ENCODE measurements at regions of chr6 and their contacts with region 1.

Region 1: DNA sequence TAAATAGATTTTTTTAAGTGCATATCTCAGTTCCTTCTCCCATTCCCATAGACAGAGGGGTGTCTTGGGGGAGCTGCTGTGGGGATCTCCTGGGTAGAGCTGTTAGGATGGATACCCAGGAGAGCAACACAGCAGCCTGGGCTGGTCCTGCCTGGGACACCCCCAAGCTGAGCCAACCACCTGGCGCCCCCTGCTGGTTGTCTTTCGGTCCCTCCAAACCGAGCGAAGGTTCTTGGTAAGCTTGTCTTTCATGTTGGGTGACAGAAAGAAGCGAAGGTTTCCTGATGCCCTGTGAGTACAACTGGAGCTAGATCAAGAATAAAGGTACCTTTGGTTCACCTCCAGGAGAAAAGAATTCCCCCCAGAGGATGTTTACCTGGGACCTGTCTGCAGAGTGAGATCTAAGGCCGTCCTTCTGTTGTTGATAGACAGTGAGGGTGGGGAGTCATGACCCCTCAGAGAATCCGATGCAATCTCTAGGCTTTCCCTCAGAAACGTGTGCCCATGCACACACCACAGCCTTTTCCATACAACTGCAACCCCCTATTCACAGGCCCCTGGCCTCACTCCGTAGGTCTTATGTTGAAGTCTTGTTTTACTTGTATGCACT is 50.8 kb downstream of the SNX9 start:
- DNase-seq: peak; percentile 73
- ATAC-seq: peak; percentile 87
- H3K4me3 Mint-ChIP-seq: no peak overlapping the region
- H3K27ac Mint-ChIP-seq: no peak overlapping the region
- H3K4me1 Mint-ChIP-seq: peaks cover 26% of the 10 kb centered on the region
- H3K27me3 Mint-ChIP-seq: no peaks in the 10 kb centered on the region
- CTCF ChIP-seq: peak; percentile 63

Region 2: DNA sequence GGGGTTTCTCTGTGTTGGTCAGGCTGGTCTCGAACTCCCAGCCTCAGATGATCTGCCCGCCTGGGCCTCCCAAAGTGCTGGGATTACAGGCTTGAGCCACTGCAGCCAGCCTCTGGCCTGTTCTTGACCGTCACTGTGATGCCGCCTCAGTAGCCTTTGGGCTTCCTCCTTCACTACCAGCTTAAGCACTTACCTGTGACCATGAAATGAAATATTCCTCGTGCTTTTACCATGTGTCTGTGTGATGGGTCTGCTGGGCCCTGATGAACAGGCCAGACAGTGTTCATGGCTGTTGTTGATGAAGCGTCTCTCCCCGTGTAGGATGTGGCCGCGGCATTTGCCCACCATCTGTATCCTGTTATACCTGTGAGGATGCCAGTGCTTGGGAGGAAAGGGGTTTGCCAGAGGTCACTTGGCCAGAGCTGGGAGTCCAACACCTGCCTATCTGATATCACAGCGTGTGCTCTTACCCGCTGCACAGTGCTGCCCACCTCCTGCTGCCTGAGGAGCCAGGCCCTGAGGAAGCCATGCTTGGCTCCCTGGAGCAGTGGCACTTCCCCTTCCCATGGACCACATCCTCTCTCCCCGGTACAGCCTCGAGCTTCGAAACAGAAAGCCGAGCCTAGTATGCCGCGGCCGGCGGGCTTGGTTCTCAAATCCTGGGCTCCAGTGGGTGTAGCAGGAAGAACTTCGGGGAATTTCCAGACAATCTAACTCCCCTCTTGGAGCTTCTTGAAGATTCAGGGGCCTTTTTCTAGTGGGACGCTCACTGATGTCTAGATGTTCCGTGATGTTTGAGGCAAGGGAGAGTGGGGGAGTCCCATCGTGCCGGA is 325.0 kb before region 1 on chr6:
- CTCF ChIA-PET with region 1: no interaction called
- POLR2A ChIA-PET with region 1: no interaction called
- intact Hi-C with region 1: no loop called
- DNase-seq: no peak
- ATAC-seq: peak; percentile 70
- H3K4me3 Mint-ChIP-seq: peak overlapping the region; percentile 64
- H3K27ac Mint-ChIP-seq: peak overlapping the region; percentile 43
- H3K4me1 Mint-ChIP-seq: peaks cover 47% of the 10 kb centered on the region
- H3K27me3 Mint-ChIP-seq: no peaks in the 10 kb centered on the region
- CTCF ChIP-seq: no peak

Region 3: GRCh38 chr6:157756708-157757429 is 117.0 kb before region 1 on chr6:
- CTCF ChIA-PET with region 1: interaction called, 250 read pairs
- POLR2A ChIA-PET with region 1: interaction called, 14 read pairs
- intact Hi-C with region 1: loop called (anchors 1 kb)
- DNase-seq: peak; percentile 72
- ATAC-seq: peak; percentile 54
- H3K4me3 Mint-ChIP-seq: peak overlapping the region; percentile 38
- H3K27ac Mint-ChIP-seq: no peak overlapping the region
- H3K4me1 Mint-ChIP-seq: peaks cover 69% of the 10 kb centered on the region
- H3K27me3 Mint-ChIP-seq: peaks cover 6% of the 10 kb centered on the region
- CTCF ChIP-seq: peak; percentile 60

Region 4: GRCh38 chr6:157823001-157823527 is 50.8 kb before region 1 on chr6 and contains the start of gene SNX9:
- CTCF ChIA-PET with region 1: interaction called, 4 read pairs
- POLR2A ChIA-PET with region 1: interaction called, 3 read pairs
- intact Hi-C with region 1: loop called (anchors 1 kb)
- DNase-seq: peak; percentile 70
- ATAC-seq: peak; percentile 65
- H3K4me3 Mint-ChIP-seq: peak within 1 kb of the TSS; percentile 95
- H3K27ac Mint-ChIP-seq: peak within 1 kb of the TSS; percentile 98
- H3K4me1 Mint-ChIP-seq: peaks cover 47% of the 10 kb centered on the region
- H3K27me3 Mint-ChIP-seq: no peaks in the 10 kb centered on the region
- CTCF ChIP-seq: no peak
- total RNA-seq, gene SNX9: 38.8 and 40.0 TPM in 2 replicates

Region 5: DNA sequence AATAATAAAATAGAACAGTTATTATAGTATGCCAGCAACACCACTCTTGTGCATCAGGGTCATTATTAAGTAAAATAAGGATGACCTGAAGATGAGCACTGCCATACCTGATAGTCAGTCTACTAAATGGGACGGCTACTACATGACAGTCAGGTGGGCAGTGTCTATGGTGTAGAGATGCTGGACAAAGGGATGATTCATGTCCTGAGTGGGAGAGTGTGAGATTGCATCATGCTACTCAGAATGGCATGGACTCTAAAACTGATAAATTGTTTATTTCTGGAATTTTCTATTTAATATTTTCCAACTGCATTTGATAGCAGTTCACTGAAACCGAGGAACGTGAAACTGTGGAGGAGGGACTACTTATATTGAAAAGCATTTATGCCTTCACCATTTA is 12.0 kb before region 1 on chr6:
- CTCF ChIA-PET with region 1: interaction called, 11 read pairs
- POLR2A ChIA-PET with region 1: interaction called, 3 read pairs
- intact Hi-C with region 1: no loop called
- DNase-seq: no peak
- ATAC-seq: no peak
- H3K4me3 Mint-ChIP-seq: no peak overlapping the region
- H3K27ac Mint-ChIP-seq: no peak overlapping the region
- H3K4me1 Mint-ChIP-seq: peaks cover 61% of the 10 kb centered on the region
- H3K27me3 Mint-ChIP-seq: no peaks in the 10 kb centered on the region
- CTCF ChIP-seq: no peak

Region 6: DNA sequence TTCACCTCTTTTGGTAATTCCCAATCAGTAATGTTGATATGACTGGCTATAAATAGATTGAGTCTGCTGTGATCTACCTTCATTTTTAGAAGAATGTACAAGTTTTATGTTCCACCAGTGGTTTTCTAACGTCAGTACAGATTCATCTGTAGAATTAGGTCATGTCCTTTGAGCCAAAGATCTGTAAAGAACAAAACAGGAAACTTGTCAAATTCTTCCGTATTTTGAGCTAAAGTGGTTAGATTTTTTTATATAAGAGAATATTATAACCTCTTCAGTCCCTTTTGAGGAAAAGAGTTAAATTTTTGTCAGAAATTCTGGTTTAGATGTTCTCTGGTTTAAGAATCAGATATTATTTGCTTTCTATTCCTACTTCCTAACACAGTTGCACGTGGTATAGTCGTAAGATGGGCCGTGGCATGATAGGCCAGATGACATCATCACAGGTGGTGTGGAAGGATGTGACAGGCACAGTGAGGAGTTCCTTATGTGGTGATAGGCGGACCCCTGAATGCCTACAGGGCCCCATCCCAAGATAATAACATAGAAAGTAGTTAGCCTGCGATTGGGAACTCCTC is 11.5 kb after region 1 on chr6:
- CTCF ChIA-PET with region 1: interaction called, 10 read pairs
- POLR2A ChIA-PET with region 1: no interaction called
- intact Hi-C with region 1: no loop called
- DNase-seq: no peak
- ATAC-seq: peak; percentile 86
- H3K4me3 Mint-ChIP-seq: peak overlapping the region; percentile 24
- H3K27ac Mint-ChIP-seq: peak overlapping the region; percentile 76
- H3K4me1 Mint-ChIP-seq: peaks cover 37% of the 10 kb centered on the region
- H3K27me3 Mint-ChIP-seq: no peaks in the 10 kb centered on the region
- CTCF ChIP-seq: no peak

Region 7: DNA sequence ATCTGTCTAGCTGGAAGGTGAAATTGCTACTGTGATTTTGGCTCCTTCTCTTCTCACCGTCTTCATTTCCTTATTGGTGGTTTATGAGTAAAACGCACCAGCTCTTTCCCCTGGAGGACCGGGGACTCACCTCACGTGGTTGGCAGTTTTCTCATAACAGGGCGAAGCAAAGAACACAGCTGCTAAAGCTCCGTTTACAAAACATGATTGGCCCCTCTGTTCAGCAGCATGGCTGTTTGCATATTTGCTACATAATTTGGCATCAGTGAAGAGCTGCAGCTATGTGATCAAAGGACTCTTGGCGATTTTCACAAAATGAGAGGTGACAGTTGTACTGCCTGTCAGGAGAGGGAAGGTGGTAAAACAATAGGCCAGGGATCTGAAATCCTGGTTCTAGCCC is 665.6 kb after region 1 on chr6:
- CTCF ChIA-PET with region 1: no interaction called
- POLR2A ChIA-PET with region 1: no interaction called
- intact Hi-C with region 1: no loop called
- DNase-seq: no peak
- ATAC-seq: no peak
- H3K4me3 Mint-ChIP-seq: no peak overlapping the region
- H3K27ac Mint-ChIP-seq: no peak overlapping the region
- H3K4me1 Mint-ChIP-seq: peaks cover 3% of the 10 kb centered on the region
- H3K27me3 Mint-ChIP-seq: peaks cover 48% of the 10 kb centered on the region
- CTCF ChIP-seq: no peak

Measured in activated B cell treated with CpG ODN at 0.5 μM for 24 hours (primary cell).